Activated T-helper 1 cell treated with anti-CD3 and anti-CD28 coated beads, Interleukin-12 subunit alpha, Interleukin-12 subunit beta, Interleukin-2, Interleukin-4 antibody, amounts not matched to agents 30 ng/mL and 10 ng/mL and 1 ng/mL, durations not matched to agents 14 hours and 24 hours and 36 hours (primary cell): ENCODE measurements at regions of chr10 and their contacts with region 1.

Region 1: DNA sequence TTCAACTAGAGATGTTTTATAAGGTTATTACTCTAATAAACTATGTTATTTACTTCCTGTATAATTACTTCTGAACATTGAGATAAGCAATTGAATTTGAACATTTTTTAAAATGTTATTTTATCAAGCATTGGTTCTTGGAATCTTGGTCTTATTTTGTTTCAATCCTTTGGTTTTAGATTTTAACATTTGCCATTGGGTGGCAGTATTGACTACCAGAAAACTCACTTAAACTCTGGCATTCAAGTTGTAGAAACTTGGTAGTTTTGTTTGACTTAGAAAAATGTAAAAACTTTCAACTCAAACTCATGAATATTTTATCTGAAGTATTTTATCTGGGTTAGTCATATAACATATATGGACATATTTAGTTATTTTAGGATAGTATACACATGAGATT is 48.1 kb downstream of the ATRNL1 start:
- DNase-seq: no peak
- H3K4me3 Mint-ChIP-seq: no peak overlapping the region
- H3K27ac Mint-ChIP-seq: no peak overlapping the region
- H3K4me1 Mint-ChIP-seq: no peaks in the 10 kb centered on the region
- H3K27me3 Mint-ChIP-seq: peaks cover 3% of the 10 kb centered on the region

Region 2: GRCh38 chr10:116385994-116386809 is 1244.9 kb after region 1 on chr10:
- intact Hi-C with region 1: loop called (anchors 10 kb)
- DNase-seq: no peak
- H3K4me3 Mint-ChIP-seq: no peak overlapping the region
- H3K27ac Mint-ChIP-seq: no peak overlapping the region
- H3K4me1 Mint-ChIP-seq: no peaks in the 10 kb centered on the region
- H3K27me3 Mint-ChIP-seq: no peaks in the 10 kb centered on the region